Activated naive CD4-positive, alpha-beta T cell treated with anti-CD3 and anti-CD28 coated beads for 36 hours (primary cell): ENCODE measurements at regions of chr4 and their contacts with region 1.

Region 1: GRCh38 chr4:109648266-109648996 is 54.8 kb downstream of the CASP6 start:
- DNase-seq: no peak
- H3K4me3 Mint-ChIP-seq: peak overlapping the region; percentile 59
- H3K27ac Mint-ChIP-seq: peak overlapping the region; percentile 77
- H3K4me1 Mint-ChIP-seq: peaks cover 45% of the 10 kb centered on the region
- H3K27me3 Mint-ChIP-seq: no peaks in the 10 kb centered on the region

Region 2: DNA sequence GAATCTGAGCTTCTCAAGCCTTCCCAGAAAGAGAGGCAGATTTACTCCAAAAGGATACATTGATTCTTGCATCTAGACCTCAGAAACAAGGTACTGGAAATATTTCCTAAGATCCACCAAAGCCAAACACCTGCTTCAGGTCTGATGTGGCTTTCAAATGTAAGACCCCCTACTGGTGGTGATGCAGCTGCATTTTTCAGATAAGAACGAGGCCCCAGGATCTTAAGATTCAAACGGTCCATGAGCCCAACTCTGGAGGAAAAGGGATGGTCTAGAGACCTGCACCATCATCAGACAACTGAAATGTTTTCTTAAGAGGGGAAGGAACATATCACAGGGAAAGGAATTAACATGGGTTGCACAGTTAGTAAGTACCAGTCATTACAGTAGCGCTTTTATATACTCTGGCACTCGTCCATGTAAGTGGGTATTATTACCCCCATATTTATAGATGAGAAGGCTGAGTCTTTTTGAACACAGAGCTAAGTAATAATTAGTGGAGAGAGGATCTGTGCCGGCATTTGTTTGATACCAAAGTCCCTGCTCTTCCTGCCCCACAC is 1553.4 kb before region 1 on chr4:
- CTCF ChIA-PET with region 1: no interaction called
- intact Hi-C with region 1: loop called (anchors 10 kb)
- DNase-seq: no peak
- H3K4me3 Mint-ChIP-seq: peak overlapping the region; percentile 11
- H3K27ac Mint-ChIP-seq: peak overlapping the region; percentile 96
- H3K4me1 Mint-ChIP-seq: peaks cover 86% of the 10 kb centered on the region
- H3K27me3 Mint-ChIP-seq: no peaks in the 10 kb centered on the region

Region 3: DNA sequence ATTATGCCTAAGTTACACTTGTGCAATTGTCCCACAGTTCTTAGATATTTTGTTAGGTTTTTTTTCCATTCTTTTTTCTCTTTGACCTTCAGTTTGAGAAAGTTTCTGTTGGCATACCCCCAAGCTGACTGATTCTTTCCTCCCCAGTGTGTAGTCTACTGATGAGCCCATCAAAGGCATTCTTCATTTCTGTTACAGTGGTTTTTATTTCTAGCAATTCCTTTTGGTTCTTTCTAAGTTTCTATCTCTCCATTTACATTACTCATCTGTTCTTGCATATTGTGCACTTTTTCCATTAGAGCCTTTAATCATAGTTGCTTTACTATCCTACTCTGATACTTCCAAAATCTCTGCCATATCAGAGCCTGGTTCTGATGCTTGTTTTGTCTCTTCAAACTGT is 22.9 kb after region 1 on chr4:
- CTCF ChIA-PET with region 1: interaction called, 4 read pairs
- intact Hi-C with region 1: loop called (anchors 2 kb)
- DNase-seq: peak; percentile 39
- H3K4me3 Mint-ChIP-seq: no peak overlapping the region
- H3K27ac Mint-ChIP-seq: peak overlapping the region; percentile 65
- H3K4me1 Mint-ChIP-seq: peaks cover 57% of the 10 kb centered on the region
- H3K27me3 Mint-ChIP-seq: no peaks in the 10 kb centered on the region

Region 4: DNA sequence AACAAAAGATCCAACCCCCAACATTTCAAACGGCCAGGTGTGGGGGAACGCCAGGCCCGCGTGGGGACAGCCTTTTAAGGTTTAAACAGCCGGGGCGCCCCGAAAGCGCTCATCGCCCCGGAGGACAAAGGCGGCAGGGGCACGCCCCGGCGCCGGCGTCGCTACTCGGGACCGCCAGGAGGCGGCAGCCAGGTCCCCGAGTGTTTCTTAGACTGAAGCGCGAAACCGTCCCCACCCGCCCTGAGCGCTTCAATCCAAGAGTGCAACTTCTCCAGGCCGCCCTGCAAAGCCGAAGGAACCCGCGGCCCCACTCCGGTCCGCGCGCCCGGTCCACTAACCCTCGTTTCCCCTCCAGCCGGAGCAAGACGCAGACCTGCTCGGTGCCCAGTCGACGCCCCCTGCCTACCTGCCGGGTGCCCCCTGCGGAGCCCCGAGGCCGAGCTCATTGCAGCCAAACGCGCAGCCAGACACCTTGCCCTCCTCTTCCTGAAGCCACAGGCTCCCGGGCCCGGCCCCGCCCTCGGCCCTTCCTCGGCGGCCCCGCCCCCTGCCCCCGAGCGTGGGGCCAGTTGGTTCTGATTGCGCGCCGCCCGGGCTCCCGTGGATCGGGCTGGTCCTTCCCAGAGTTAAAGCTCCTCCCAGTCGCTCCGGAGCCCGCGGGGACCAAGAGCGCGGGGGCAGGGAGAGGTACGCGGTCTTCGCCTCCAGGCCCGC is 54.7 kb after region 1 on chr4 and contains the start of gene CASP6:
- CTCF ChIA-PET with region 1: no interaction called
- intact Hi-C with region 1: loop called (anchors 2 kb)
- DNase-seq: peak; percentile 76
- H3K4me3 Mint-ChIP-seq: peak within 1 kb of the TSS; percentile 86
- H3K27ac Mint-ChIP-seq: peak within 1 kb of the TSS; percentile 82
- H3K4me1 Mint-ChIP-seq: peaks cover 28% of the 10 kb centered on the region
- H3K27me3 Mint-ChIP-seq: no peaks in the 10 kb centered on the region
- total RNA-seq, gene CASP6: 11.5 to 12.1 TPM

Region 5: DNA sequence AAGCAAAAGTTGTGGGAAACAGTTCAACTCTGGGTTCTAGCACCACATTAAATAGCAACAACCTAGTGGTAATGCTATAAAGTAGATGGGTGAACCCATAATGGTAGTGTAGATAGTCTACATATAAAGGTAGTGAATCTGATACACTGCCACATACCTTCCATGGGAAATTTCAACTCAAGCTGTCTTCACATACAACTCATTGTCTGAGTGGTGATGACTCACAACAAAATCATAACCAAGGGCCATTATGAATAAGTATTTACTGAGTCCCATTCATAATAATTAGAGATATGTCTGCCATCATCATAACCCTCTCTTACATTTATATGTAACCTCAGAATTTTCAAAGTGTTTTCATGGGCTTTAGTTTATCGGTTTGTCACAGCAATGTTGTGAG is 299.0 kb after region 1 on chr4:
- CTCF ChIA-PET with region 1: no interaction called
- intact Hi-C with region 1: loop called (anchors 5 kb)
- DNase-seq: no peak
- H3K4me3 Mint-ChIP-seq: no peak overlapping the region
- H3K27ac Mint-ChIP-seq: peak overlapping the region; percentile 65
- H3K4me1 Mint-ChIP-seq: peaks cover 27% of the 10 kb centered on the region
- H3K27me3 Mint-ChIP-seq: no peaks in the 10 kb centered on the region

Region 6: GRCh38 chr4:110344162-110344561 is 695.7 kb after region 1 on chr4:
- CTCF ChIA-PET with region 1: no interaction called
- intact Hi-C with region 1: no loop called
- DNase-seq: no peak
- H3K4me3 Mint-ChIP-seq: no peak overlapping the region
- H3K27ac Mint-ChIP-seq: no peak overlapping the region
- H3K4me1 Mint-ChIP-seq: no peaks in the 10 kb centered on the region
- H3K27me3 Mint-ChIP-seq: peaks cover 18% of the 10 kb centered on the region